ENCODE measurements at regions of chr5 and their contacts with region 1.

Region 1: DNA sequence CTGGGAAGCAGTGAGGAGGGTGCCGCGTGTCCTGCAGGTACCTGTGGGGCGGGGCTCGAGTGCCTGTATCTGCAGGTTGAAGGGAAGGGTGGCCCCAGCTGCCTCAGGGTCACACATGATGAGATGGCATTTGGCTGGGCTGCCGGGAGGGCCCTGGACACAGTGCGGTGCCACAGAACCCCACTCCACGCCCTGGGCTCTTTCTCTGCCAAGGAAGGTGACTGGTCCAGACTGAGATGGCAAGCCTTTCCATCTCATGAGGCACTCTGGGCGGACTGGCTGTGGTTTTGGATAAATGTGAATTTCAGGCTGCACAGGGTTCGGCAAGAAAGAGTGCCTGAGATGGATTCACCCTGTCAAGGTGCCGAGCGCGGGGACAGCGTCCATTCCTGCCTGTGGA is 69.4 kb downstream of the FGF18 start:
- DNase-seq: no peak
- H3K4me3 ChIP-seq: no peak overlapping the region
- H3K27ac ChIP-seq: no peak overlapping the region
- H3K4me1 ChIP-seq: no peaks in the 10 kb centered on the region
- H3K27me3 ChIP-seq: peaks cover 19% of the 10 kb centered on the region
- CTCF ChIP-seq: no peak

Region 2: DNA sequence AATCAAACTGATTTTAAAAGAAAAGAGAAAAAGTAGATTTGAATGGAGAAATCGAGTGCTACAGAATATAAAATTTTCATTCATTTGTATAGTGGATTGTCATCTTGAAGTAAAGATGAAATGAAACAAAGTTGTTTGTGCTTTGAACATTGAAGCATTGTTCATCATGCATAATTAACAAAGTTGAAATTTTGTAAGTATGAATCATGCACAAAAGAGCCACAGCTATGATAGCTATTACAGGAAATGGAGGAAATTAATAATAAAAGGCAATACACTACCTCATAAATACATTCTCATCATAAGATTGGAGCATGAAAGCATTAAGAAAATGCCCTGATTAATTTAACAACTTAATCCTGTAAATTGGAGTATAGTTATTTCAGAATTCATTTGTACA is 333.3 kb before region 1 on chr5:
- dilution Hi-C with region 1: no loop called
- DNase-seq: no peak
- H3K4me3 ChIP-seq: no peak overlapping the region
- H3K27ac ChIP-seq: no peak overlapping the region
- H3K4me1 ChIP-seq: peaks cover 5% of the 10 kb centered on the region
- H3K27me3 ChIP-seq: no peaks in the 10 kb centered on the region
- CTCF ChIP-seq: no peak

Region 3: GRCh38 chr5:171418316-171418981 is 70.4 kb before region 1 on chr5:
- dilution Hi-C with region 1: loop called (anchors 5 kb)
- DNase-seq: no peak
- H3K4me3 ChIP-seq: no peak overlapping the region
- H3K27ac ChIP-seq: no peak overlapping the region
- H3K4me1 ChIP-seq: peaks cover 6% of the 10 kb centered on the region
- H3K27me3 ChIP-seq: peaks cover 27% of the 10 kb centered on the region
- CTCF ChIP-seq: peak; percentile 80 to 94 (median 91)

Region 4: GRCh38 chr5:171524466-171524865 is 35.6 kb after region 1 on chr5:
- dilution Hi-C with region 1: no loop called
- DNase-seq: no peak
- H3K4me3 ChIP-seq: no peak overlapping the region
- H3K27ac ChIP-seq: no peak overlapping the region
- H3K4me1 ChIP-seq: peaks cover 26% of the 10 kb centered on the region
- H3K27me3 ChIP-seq: no peaks in the 10 kb centered on the region
- CTCF ChIP-seq: no peak

Region 5: GRCh38 chr5:171571663-171572062 is 82.8 kb after region 1 on chr5:
- dilution Hi-C with region 1: no loop called
- DNase-seq: no peak
- H3K4me3 ChIP-seq: no peak overlapping the region
- H3K27ac ChIP-seq: no peak overlapping the region
- H3K4me1 ChIP-seq: no peaks in the 10 kb centered on the region
- H3K27me3 ChIP-seq: no peaks in the 10 kb centered on the region
- CTCF ChIP-seq: no peak

Region 6: GRCh38 chr5:171797543-171797942 is 308.7 kb after region 1 on chr5:
- dilution Hi-C with region 1: no loop called
- DNase-seq: no peak
- H3K4me3 ChIP-seq: no peak overlapping the region
- H3K27ac ChIP-seq: no peak overlapping the region
- H3K4me1 ChIP-seq: no peaks in the 10 kb centered on the region
- H3K27me3 ChIP-seq: no peaks in the 10 kb centered on the region
- CTCF ChIP-seq: no peak

Measured in keratinocyte (primary cell).